Activated CD8-positive, alpha-beta memory T cell treated with anti-CD3 and anti-CD28 coated beads, Interleukin-2, amount 10 ng/mL, durations not matched to agents 7 days and 5 days (primary cell): ENCODE measurements at regions of chrX and their contacts with region 1.

Region 1: GRCh38 chrX:68828740-68829552 is at the start of gene EFNB1:
- DNase-seq: peak; percentile 90
- ATAC-seq: peak; percentile 94
- H3K4me3 Mint-ChIP-seq: peak within 1 kb of the TSS; percentile 81
- H3K27ac Mint-ChIP-seq: peak within 1 kb of the TSS; percentile 81
- H3K4me1 Mint-ChIP-seq: peaks cover 14% of the 10 kb centered on the region
- H3K27me3 Mint-ChIP-seq: peaks cover 7% of the 10 kb centered on the region
- total RNA-seq, gene EFNB1: 4.2 to 4.3 TPM

Region 2: DNA sequence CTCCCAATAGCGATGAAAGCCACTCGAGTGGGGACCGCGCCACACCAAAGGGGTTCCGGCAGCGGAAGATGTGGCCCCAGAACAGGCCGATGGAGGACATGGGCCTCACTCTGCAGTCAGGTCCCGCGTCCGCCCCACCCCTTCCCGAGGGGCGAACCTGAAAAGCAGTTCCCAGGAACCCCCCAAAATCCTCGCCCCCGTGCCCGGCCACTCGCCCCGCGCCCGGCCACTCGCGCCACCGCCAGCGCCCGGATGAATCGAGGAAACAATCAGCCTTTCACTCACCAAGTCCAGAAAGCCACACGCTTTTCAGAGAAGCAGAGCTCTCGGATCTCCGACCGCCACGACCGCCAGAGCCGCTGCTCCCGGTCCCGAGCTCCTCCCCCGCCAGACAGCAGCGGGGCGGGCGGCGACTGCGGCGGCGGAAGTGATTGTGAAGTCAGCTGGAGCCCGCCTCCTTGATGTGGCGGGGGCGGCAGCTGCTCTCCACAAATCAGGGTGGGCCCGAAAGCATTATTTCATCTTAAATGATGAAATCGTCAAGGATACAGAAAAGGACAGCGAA is 336.2 kb after region 1 on chrX and contains the start of gene PJA1:
- CTCF ChIA-PET with region 1: interaction called, 12 read pairs
- DNase-seq: peak; percentile 80
- ATAC-seq: peak; percentile 80
- H3K4me3 Mint-ChIP-seq: peak within 1 kb of the TSS; percentile 78
- H3K27ac Mint-ChIP-seq: peak within 1 kb of the TSS; percentile 84
- H3K4me1 Mint-ChIP-seq: peaks cover 27% of the 10 kb centered on the region
- H3K27me3 Mint-ChIP-seq: no peaks in the 10 kb centered on the region
- total RNA-seq, gene PJA1: 17.5 to 20.1 TPM

Region 3: DNA sequence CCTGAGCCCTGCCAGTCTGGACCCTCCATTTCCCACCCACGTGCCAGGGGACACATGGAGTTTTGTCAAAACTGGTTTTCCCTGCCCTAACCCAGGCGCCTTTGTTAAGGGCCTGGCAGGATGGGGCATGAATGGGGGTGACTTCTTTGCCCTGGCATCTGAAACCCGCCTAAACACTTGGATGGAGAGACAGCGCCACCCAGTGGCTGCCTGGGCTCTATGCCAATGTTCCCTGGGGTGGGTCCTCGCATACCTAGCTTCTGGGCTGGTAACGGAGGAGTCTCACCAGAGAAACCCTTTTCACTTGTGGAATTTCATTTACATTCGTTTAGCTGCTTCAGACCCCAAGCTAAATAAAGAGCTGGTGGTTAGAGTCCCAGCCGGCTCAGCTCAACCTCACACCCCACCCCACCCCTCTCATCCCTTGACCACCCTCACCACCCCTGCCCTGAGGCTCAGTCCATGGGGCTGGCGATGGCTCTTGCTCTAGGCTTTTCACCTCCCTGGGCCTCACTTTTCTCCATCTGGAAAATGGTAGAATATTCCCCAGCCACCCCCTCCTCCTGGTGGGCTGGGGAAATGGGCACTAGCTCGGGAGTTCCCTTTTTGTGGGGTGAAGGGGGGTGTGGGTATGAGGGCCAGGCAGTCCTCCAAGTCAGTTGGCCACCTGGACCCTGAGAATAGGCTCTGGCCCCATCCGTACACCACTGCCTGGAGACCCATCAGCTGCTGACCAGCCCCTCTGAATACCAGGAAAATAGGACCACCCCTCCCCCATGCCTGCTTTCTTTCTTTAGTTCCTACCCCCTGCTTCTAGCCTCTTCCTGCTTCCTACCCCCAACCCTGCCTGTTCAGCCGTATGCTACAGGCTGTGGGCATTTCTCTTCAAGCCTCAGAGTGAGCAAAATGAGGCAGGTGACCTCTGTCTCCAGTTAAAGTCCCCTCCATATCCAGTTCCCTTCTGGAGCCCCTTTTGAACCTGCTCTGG is 393.5 kb after region 1 on chrX:
- CTCF ChIA-PET with region 1: interaction called, 64 read pairs
- DNase-seq: peak; percentile 70
- ATAC-seq: peak; percentile 63
- H3K4me3 Mint-ChIP-seq: no peak overlapping the region
- H3K27ac Mint-ChIP-seq: no peak overlapping the region
- H3K4me1 Mint-ChIP-seq: no peaks in the 10 kb centered on the region
- H3K27me3 Mint-ChIP-seq: no peaks in the 10 kb centered on the region

Region 4: DNA sequence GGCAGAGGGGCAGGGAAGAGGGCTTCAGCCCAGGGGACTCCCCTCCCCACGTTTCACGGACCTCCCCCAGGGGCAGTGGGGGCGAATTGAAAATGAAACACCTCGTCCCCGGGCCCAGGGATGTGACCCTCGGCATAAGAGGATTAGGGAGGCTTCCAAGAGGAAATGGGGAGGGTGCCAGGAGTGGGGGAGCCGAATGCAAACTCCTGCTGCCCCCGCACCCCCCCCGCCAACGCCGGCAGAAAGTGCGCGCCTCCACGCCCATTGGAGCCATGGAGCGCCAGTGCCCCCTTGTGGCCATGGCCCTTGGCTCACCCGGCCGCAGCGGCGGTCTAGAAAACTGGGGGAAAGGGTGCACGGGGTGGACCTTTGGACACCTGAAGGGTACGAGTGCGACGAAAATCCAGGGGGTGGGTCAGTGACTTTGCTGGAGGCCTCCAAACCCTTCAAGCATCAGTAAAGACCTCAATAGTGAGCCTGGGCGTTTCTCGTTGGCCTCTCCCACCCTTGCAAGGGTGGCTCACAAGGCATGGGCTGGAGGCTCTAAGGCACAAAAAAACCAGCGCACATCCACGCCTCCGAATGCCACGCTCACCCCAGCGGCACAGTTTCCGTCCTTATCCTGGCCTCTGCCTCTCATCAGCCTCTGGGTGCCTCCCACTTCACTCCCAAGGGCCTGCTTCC is 457.1 kb after region 1 on chrX:
- CTCF ChIA-PET with region 1: interaction called, 20 read pairs
- DNase-seq: peak; percentile 52
- ATAC-seq: peak; percentile 58
- H3K4me3 Mint-ChIP-seq: peak overlapping the region; percentile 30
- H3K27ac Mint-ChIP-seq: no peak overlapping the region
- H3K4me1 Mint-ChIP-seq: no peaks in the 10 kb centered on the region
- H3K27me3 Mint-ChIP-seq: no peaks in the 10 kb centered on the region